ENCODE measurements at regions of chr14 and their contacts with region 1.

Region 1: DNA sequence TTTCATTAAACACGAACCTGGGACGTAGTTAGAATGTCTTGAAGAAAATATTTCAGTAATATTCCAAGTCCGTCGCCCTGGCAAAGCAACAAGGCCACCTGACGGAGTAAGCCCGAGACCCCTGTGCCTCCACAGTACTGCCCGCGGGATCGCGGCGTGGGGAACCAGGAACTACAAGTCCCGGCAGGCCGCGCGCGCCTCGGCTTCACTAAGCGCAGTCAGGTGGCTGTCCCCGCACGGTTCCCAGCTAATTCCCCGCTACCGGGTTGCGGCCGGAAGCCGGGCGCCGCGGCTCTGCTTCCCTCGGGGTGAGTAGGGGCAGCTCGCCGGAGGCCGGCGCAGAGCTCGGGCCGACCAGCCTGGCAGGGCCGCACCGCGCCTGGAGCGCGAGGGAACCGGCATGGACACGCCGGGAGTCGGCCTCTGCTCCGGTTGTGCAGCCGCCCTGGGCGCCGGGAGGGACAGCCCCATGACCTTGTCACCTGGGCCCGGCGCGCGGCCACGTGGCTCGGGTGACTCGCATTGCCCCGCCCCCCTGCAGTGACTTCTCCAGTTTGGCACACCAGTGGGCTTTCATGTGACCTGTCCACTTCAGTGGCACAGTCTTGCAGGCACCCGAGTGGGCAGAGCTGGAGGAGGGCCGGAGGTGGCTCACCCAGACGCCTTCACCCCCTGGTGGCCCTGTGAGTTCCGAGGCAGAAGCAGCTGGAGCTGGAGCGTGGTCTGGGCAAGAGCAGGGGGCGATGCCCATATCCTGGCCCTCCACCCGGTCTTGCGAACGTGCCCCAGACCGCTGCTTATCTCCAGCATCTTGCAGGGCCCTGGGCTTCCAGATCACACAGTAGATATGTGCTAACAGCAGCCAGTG is at the start of gene ADCK1:
- DNase-seq: peak; percentile 91
- H3K4me3 Mint-ChIP-seq: peak within 1 kb of the TSS; percentile 86
- H3K27ac Mint-ChIP-seq: peak within 1 kb of the TSS; percentile 84
- H3K4me1 Mint-ChIP-seq: peaks cover 12% of the 10 kb centered on the region
- H3K27me3 Mint-ChIP-seq: no peaks in the 10 kb centered on the region
- total RNA-seq, gene ADCK1: 4.2 to 5.1 TPM

Region 2: DNA sequence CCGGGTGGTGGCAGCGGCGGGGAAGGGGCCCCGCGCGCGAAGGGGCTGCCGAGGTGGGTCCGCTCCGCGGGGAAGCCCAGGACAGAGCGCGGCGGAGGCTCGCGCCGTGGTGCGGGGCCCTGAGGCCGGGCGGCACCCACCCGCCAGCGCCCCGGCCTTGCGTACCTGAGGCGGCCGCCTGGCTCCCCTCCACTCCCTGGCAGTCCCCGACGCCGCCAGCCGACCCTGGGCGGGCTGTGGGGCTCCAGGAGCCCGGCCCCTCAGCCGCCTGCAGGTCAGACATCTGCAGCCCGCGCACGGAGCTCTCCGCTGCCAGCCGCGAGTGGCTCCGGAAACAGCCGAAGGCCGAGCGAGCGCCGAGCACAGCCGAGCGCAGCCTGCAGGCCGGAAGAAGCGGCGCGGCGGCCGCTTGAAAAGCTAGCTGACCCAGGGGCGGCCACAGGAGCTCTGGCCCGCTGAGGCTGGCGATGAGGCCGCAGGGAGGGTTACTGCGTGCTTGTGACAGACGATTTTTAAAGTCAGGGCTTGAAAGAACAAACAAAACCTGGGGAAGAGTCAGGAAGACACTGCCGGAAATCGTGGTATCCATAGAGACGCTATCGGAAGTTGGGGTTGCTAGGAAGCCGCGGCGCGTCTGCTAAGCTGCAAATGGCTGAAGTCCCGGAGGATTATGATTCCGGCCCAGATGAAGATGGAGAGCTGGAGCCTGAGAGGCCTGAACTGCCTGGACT is 423.2 kb before region 1 on chr14 and contains the starts of genes SAMD15 and TMED8:
- CTCF ChIA-PET with region 1: no interaction called
- intact Hi-C with region 1: loop called (anchors 1 kb)
- DNase-seq: peak; percentile 84
- H3K4me3 Mint-ChIP-seq: peak within 1 kb of the TSS; percentile 90
- H3K27ac Mint-ChIP-seq: peak within 1 kb of the TSS; percentile 80
- H3K4me1 Mint-ChIP-seq: peaks cover 38% of the 10 kb centered on the region
- H3K27me3 Mint-ChIP-seq: no peaks in the 10 kb centered on the region
- total RNA-seq, gene SAMD15: 0.10 TPM in 1 of 2 experiments, not detected in the other
- total RNA-seq, gene TMED8: 21.5 to 21.7 TPM

Region 3: DNA sequence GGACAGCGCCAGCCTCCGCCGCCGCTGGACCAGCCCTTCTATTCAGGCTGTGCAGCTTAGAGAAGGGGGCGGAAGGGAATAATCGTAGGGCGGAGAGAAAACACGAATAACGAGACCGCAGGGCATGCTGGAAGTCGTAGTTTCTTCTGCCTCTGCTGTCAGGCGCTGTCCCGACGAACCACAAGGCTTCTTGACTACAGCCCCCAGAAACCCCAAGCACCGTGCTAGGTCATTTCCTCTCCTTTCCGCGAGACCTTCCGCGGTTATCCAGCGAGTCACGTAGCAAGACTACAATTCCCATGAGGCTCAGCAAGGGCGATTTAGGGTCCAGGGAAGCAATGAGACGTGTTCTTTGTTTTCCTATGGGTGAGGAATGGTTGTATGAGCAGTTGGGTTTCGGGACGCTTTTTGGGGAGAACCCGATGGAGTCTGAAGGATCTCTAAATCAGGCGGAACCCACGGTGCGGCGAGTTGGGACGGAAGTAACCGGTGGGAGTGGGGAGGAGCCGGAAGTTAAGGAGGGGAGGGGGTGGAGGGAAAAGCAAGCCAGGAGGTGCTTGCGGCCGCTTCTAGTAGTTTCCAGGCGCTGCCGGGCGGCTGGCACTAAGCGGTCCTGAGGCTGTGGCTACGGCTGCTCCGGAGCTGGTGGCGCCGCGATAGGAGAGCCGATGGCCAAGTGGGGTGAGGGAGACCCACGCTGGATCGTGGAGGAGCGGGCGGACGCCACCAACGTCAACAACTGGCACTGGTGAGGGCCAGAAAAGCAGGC is 342.4 kb before region 1 on chr14 and contains the starts of genes AHSA1 and VIPAS39:
- CTCF ChIA-PET with region 1: no interaction called
- intact Hi-C with region 1: loop called (anchors 1 kb)
- DNase-seq: peak; percentile 98
- H3K4me3 Mint-ChIP-seq: peak within 1 kb of the TSS; percentile 100
- H3K27ac Mint-ChIP-seq: peak within 1 kb of the TSS; percentile 100
- H3K4me1 Mint-ChIP-seq: peaks cover 32% of the 10 kb centered on the region
- H3K27me3 Mint-ChIP-seq: no peaks in the 10 kb centered on the region
- total RNA-seq, gene AHSA1: 230 to 246 TPM
- total RNA-seq, gene VIPAS39: 12.3 to 13.3 TPM

Region 4: DNA sequence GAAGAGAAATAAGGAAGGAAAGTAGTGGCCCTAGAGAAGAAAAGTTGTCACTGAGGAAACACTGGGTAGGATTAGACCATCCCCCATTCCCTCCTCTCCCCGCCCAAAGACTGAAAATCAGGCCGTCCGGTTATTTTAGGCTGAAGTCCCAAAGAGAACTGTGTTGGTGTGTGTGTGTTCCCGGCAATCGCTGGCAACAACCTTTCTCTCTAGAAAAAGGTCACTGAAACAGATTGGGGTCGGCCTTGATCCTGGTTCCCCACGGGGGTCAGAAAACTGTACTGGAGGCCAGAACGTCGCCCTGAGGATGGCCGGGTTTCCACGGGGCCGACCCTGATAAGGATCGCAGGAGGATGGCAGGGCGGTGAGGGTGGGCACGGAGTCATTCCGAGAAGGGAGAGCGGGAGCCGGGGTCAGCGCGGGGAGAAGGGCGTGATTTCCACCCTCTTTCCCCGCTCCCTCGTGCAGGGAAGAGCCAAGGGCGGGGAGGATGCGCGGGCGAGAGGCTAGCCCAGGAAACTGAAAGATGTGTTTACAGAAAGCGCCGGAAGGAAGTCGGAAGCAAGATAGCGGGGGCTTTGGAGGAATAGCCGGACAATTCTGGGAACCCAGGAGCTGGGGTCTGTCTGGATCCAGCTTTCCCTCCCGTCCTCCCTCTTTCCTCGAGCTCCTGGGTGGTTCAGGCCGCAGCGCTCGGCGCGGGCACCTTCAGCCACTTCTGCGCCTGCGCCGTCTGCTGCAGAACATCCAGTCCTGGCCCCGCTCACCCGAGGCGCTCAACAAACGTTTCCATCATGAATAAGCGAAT is 158.4 kb before region 1 on chr14:
- CTCF ChIA-PET with region 1: no interaction called
- intact Hi-C with region 1: loop called (anchors 2 kb)
- DNase-seq: peak; percentile 79
- H3K4me3 Mint-ChIP-seq: peak overlapping the region; percentile 84
- H3K27ac Mint-ChIP-seq: peak overlapping the region; percentile 84
- H3K4me1 Mint-ChIP-seq: peaks cover 17% of the 10 kb centered on the region
- H3K27me3 Mint-ChIP-seq: no peaks in the 10 kb centered on the region

Region 5: DNA sequence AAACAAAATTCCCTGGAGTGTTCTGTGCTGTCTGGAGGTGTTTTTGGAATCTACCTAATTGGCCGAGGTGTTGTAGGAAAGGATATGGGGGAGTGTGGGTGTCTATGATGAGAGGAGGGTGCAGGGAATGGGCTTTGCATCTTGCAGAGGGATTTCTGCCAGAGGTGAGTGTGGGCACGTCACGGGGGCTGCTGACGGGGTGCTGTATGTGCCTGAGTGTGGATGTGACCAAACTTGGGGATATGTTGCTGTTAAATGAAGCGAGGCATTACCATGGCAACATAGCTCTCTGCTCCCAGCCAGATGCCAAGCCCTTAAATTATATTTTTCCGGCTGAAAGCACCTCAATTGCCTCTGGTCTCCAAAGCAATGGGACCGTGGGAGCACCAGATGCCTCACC is 139.3 kb before region 1 on chr14:
- CTCF ChIA-PET with region 1: no interaction called
- intact Hi-C with region 1: loop called (anchors 1 kb)
- DNase-seq: no peak
- H3K4me3 Mint-ChIP-seq: no peak overlapping the region
- H3K27ac Mint-ChIP-seq: no peak overlapping the region
- H3K4me1 Mint-ChIP-seq: no peaks in the 10 kb centered on the region
- H3K27me3 Mint-ChIP-seq: no peaks in the 10 kb centered on the region

Region 6: DNA sequence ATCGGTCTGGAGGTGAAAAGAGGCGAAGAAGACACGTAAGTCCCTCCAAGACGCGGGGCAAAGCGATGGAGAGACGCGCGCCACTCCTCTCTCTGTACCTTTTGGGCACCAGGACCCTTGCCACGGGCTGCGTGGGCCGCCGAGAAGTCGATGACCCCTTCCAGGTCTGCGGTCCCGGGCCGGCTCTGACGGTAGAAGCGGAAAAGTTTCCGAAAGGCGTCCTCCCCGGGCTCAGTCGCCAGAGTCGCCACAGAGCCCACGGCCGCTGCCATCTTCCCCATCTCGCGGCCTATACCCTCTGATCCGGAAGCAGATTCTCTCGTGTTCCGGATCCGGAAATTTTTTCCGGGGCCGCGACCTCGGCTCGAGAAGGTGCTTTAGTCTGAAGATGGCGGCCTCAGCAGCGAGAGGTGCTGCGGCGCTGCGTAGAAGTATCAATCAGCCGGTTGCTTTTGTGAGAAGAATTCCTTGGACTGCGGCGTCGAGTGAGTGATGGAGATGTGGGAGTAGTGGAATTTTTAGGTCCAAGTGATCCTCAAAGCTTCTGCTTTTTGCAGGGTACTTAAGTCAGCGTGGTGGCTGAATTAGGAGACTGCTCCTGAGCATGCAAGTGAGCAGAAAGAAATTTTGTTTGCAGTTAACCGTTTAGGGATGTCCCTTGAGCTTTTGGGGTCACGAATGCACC is 92.2 kb before region 1 on chr14 and contains the starts of genes ALKBH1 and SLIRP:
- CTCF ChIA-PET with region 1: interaction called, 3 read pairs
- intact Hi-C with region 1: loop called (anchors 1 kb)
- DNase-seq: peak; percentile 92
- H3K4me3 Mint-ChIP-seq: peak within 1 kb of the TSS; percentile 87
- H3K27ac Mint-ChIP-seq: peak within 1 kb of the TSS; percentile 88
- H3K4me1 Mint-ChIP-seq: peaks cover 48% of the 10 kb centered on the region
- H3K27me3 Mint-ChIP-seq: no peaks in the 10 kb centered on the region
- total RNA-seq, gene ALKBH1: 13.5 to 14.5 TPM
- total RNA-seq, gene SLIRP: 134 to 149 TPM

Region 7: DNA sequence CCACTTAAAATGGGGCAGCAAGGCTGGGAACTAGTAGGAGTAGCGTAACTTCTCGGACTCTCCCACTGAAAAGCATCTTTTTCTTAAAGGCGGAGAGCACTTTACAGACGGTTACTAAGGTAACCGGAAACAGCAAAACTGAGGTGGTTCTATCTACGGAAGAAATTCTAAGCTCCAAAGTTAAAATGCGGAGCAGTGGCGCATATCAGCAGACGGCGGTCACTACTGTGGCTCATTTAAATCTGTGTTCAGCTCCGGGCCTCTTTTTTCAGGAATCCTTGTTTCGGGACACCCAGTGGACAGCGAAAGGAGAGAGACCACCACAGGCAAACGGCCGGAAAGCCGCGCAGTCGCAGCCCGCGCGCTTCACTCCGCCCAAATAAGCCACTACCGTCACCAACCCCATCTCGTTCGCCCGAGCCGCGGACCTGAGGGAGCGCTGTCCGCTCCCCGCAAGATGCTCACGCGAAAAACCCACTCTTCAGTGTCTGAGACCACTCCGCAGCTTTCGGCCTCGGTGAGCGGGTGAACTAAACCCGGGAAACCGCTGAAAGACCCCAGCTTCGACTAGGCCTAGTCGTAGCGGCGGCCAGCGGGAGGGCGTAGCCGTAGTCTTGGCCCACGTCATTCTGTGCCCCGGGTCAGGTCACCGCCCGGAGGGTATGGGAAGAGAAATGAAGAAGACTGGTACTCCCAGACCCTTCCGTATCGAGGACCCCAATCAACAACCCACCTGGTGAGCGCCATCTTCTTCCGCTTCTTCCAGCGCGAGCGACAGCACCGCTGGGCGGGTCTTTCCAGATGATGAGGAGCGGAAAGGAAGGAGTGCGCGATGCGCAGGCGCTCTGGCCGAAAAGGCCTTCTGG is 39.5 kb before region 1 on chr14 and contains the start of gene SNW1:
- CTCF ChIA-PET with region 1: interaction called, 6 read pairs
- intact Hi-C with region 1: loop called (anchors 1 kb)
- DNase-seq: peak; percentile 95
- H3K4me3 Mint-ChIP-seq: peak within 1 kb of the TSS; percentile 94
- H3K27ac Mint-ChIP-seq: peak within 1 kb of the TSS; percentile 95
- H3K4me1 Mint-ChIP-seq: peaks cover 32% of the 10 kb centered on the region
- H3K27me3 Mint-ChIP-seq: no peaks in the 10 kb centered on the region
- total RNA-seq, gene SNW1: 117 to 129 TPM

Region 8: GRCh38 chr14:78220273-78220672 is 420.2 kb after region 1 on chr14:
- CTCF ChIA-PET with region 1: no interaction called
- intact Hi-C with region 1: no loop called
- DNase-seq: no peak
- H3K4me3 Mint-ChIP-seq: no peak overlapping the region
- H3K27ac Mint-ChIP-seq: no peak overlapping the region
- H3K4me1 Mint-ChIP-seq: no peaks in the 10 kb centered on the region
- H3K27me3 Mint-ChIP-seq: no peaks in the 10 kb centered on the region